ENCODE measurements at regions of chr7 and their contacts with region 1.

Region 1: DNA sequence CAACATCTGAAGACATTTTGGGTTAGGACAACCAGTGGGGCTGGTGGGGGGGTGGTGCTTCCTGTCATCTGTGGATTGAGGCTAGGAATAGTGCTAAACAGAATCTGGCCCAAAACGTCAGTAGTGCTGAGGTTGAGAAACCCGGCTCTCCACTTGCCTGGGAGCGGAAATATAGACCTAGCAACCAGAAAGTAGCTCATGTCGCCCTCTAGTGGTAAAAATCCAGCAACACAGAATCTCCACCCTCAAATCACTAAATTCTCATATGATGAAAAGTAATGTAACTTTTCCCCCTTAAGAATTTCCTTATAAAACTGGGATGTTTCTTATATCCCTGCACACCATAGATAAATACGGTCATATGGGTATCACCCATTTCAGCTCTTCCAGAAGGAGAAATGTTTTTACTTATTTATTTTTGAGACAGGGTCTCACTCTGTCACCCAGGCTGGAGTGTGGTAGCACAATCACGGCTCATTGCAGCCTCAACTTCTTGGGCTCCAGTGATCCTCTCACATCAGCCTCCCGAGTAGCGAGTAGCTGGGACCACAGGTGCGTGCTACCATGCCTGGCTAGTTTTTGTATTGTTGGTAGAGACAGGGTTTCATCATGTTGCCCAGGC is 34.4 kb downstream of the ZC3HAV1 start:
- DNase-seq: peak; percentile 78
- ATAC-seq: peak; percentile 96

Region 2: GRCh38 chr7:138023618-138024342 is 1051.4 kb before region 1 on chr7:
- intact Hi-C with region 1: no loop called
- DNase-seq: no peak
- ATAC-seq: no peak

Region 3: DNA sequence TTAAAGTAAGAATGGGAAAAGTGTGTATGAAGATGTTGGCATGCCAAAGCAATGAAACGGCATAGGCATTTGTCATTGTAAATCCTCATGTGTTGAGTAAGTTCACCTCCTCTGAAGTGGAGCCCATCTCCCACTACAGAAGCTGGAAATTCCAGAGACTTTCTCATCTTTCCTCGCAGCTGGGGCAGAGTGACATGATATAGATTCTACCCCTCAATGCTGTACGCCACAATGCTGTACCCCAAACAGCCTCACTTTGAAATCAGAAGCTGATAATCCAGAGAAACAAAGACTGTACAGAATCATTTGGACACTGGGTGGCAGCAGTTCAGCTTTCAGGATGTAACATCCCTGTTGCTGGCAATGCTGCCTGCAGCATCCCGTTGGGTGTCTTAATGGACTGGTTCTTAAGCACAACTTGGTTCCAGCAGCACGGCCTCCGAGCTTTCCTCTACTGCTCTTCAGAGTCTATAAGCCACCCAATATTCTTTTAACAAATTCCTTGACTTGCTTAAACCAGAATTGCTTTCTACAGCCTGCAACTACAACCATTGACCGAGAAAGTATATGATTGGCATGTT is 58.1 kb before region 1 on chr7:
- intact Hi-C with region 1: loop called (anchors 5 kb)
- DNase-seq: peak; percentile 75
- ATAC-seq: peak; percentile 87

Region 4: GRCh38 chr7:140136073-140136472 is 1060.9 kb after region 1 on chr7:
- intact Hi-C with region 1: no loop called
- DNase-seq: no peak
- ATAC-seq: no peak